ENCODE measurements at regions of chr12 and their contacts with region 1.

Region 1: DNA sequence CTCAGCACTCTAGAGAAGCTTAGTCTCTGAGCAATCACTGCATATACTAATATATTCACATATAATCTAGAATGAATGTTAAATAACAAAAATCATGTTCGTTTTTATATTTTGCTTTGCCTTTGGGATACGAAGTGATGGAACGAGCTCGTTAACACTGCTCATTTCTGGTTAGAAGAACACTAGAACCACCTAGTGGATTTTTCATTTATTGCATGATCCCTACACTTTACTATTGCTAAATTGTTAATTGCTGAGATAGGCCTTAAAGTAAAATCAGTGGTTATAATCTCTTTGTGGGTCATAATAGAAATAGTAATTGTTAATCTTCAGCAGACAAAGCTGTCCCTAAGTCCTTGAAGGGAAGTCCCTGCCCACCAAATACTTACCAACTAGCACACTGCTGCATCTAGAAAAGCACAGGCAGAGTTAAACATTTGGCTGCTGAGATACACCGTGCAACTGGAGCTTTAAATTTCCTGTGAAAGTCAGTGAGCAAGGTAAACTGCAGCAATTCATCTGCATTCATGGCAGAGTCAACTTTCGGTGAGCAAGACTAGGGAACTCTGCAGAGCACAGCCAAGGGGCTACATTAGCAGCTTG is 353.7 kb downstream of the APAF1 start:
- DNase-seq: peak; percentile 54
- H3K4me3 Mint-ChIP-seq: no peak overlapping the region
- H3K27ac Mint-ChIP-seq: no peak overlapping the region
- H3K4me1 Mint-ChIP-seq: no peaks in the 10 kb centered on the region
- H3K27me3 Mint-ChIP-seq: no peaks in the 10 kb centered on the region
- CTCF ChIP-seq: peak; percentile 55

Region 2: GRCh38 chr12:98572010-98572409 is 426.8 kb before region 1 on chr12:
- CTCF ChIA-PET with region 1: interaction called, 11 read pairs
- POLR2A ChIA-PET with region 1: no interaction called
- intact Hi-C with region 1: loop called (anchors 5 kb)
- DNase-seq: no peak
- H3K4me3 Mint-ChIP-seq: no peak overlapping the region
- H3K27ac Mint-ChIP-seq: no peak overlapping the region
- H3K4me1 Mint-ChIP-seq: no peaks in the 10 kb centered on the region
- H3K27me3 Mint-ChIP-seq: no peaks in the 10 kb centered on the region
- CTCF ChIP-seq: no peak

Region 3: DNA sequence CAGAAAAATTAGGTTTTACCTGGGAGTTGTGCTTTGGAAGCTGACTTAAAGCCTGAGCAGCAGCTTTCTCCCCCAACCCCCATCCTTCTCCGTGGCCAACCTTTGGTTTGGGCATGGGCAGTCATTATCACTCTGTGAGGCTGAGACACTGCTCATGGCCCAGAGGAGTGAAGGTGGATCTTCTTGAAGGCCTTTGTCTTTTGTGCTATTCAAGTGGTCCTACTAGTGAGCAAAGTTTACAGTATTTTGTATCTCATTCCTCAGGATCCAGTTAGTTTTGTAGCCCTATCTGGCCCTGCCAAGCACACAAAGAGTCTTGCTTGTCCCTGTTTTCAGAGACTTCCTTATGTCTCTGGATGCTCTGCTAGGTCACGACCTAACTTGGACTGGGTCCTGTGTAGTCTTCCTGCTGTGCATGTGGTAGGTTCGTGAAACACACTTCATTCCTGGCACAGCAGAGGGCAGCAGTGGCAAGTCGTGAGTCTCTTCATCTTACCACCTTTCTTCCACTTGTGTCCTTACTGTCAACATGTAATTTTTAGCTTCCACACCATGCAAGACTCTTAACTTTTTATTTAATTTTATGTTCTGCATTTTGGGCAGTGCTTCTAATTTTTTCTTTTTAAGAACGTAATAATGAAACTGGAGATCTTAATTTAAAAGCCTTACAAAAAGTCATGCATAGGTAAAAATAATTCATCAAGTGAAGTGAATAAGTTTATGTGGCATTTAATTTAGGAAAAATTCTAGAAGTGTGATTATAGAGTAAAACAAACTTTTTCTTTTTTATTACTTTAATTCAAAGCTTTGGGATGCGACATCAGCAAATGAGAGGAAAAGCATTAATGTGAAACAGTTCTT is 300.0 kb before region 1 on chr12:
- CTCF ChIA-PET with region 1: interaction called, 72 read pairs
- POLR2A ChIA-PET with region 1: interaction called, 4 read pairs
- intact Hi-C with region 1: loop called (anchors 1 kb)
- DNase-seq: peak; percentile 73
- H3K4me3 Mint-ChIP-seq: no peak overlapping the region
- H3K27ac Mint-ChIP-seq: no peak overlapping the region
- H3K4me1 Mint-ChIP-seq: peaks cover 5% of the 10 kb centered on the region
- H3K27me3 Mint-ChIP-seq: no peaks in the 10 kb centered on the region
- CTCF ChIP-seq: peak; percentile 73

Region 4: GRCh38 chr12:98736352-98737321 is 262.2 kb before region 1 on chr12:
- CTCF ChIA-PET with region 1: interaction called, 11 read pairs
- POLR2A ChIA-PET with region 1: no interaction called
- intact Hi-C with region 1: no loop called
- DNase-seq: no peak
- H3K4me3 Mint-ChIP-seq: no peak overlapping the region
- H3K27ac Mint-ChIP-seq: no peak overlapping the region
- H3K4me1 Mint-ChIP-seq: peaks cover 5% of the 10 kb centered on the region
- H3K27me3 Mint-ChIP-seq: no peaks in the 10 kb centered on the region
- CTCF ChIP-seq: no peak

Region 5: GRCh38 chr12:99009654-99010296 is 11.0 kb after region 1 on chr12:
- CTCF ChIA-PET with region 1: interaction called, 50 read pairs
- POLR2A ChIA-PET with region 1: no interaction called
- intact Hi-C with region 1: no loop called
- DNase-seq: peak; percentile 33
- H3K4me3 Mint-ChIP-seq: no peak overlapping the region
- H3K27ac Mint-ChIP-seq: no peak overlapping the region
- H3K4me1 Mint-ChIP-seq: peaks cover 7% of the 10 kb centered on the region
- H3K27me3 Mint-ChIP-seq: no peaks in the 10 kb centered on the region
- CTCF ChIP-seq: no peak

Measured in MCF 10A (cell line).